Common myeloid progenitor, CD34-positive (primary cell): ENCODE measurements at regions of chr3 and their contacts with region 1.

Region 1: DNA sequence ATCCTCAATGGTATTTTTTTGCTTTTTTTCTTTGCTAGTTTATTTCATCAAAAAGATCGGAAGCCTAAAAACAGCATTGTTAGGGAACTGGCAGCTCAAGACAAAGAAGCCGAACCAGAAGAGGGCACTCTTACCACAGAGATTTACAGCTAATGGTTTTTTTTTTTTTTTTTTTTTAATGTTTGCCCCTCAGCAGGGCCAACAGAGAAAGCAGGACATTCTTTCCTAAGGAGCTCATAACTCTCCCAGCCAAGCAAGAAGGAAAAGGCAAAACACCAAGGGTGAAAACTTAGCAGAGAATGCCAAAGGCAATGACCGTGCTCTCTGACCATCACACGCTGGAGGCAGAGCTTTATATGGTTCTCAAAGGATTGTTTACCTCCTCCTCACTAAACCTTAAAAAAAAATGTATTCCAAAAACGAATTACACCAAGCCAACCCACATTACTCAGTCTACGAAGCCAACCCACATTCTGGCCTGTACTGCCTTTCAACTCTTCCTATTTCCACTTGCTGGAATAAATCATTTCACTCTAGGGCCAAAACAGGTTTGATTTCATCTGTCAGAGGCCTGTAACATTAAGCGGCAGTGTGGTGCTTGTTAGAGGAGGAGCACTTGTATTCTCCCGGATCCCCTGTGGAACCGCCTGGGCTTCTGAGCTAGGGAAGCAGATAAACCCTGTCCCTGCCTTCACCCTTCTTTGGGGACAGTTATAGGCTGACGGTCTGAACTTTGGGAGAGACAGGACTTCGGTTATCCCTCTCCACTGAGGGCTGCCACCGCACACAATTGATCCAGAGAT is 35.6 kb upstream of the GYG1 start:
- DNase-seq: peak; percentile 71 to 83 (median 78)
- H3K4me3 ChIP-seq: no peak overlapping the region
- H3K27ac ChIP-seq: no peak overlapping the region
- H3K4me1 ChIP-seq: peaks cover 0 to 3% (median 1%) of the 10 kb centered on the region in 4 experiments
- H3K27me3 ChIP-seq: no peaks in the 10 kb centered on the region

Region 2: GRCh38 chr3:148861277-148861869 is 94.4 kb before region 1 on chr3:
- CTCF ChIA-PET with region 1: interaction called, 155 read pairs
- POLR2A ChIA-PET with region 1: no interaction called
- DNase-seq: peak; percentile 56 to 77 (median 74)
- H3K4me3 ChIP-seq: no peak overlapping the region
- H3K27ac ChIP-seq: no peak overlapping the region
- H3K4me1 ChIP-seq: peaks cover 9 to 31% (median 25%) of the 10 kb centered on the region in 4 experiments
- H3K27me3 ChIP-seq: no peaks in the 10 kb centered on the region

Region 3: GRCh38 chr3:148943506-148944205 is 12.1 kb before region 1 on chr3:
- CTCF ChIA-PET with region 1: interaction called, 29 read pairs
- POLR2A ChIA-PET with region 1: no interaction called
- DNase-seq: peak; percentile 55 to 77 (median 75)
- H3K4me3 ChIP-seq: no peak overlapping the region
- H3K27ac ChIP-seq: no peak overlapping the region
- H3K4me1 ChIP-seq: no peaks in the 10 kb centered on the region
- H3K27me3 ChIP-seq: no peaks in the 10 kb centered on the region

Region 4: GRCh38 chr3:148990236-148990635 is 34.5 kb after region 1 on chr3:
- CTCF ChIA-PET with region 1: interaction called, 12 read pairs
- POLR2A ChIA-PET with region 1: no interaction called
- DNase-seq: peak in 2 of 3 donors; percentile 18 to 44
- H3K4me3 ChIP-seq: peak overlapping the region in 5 of 7 experiments; percentile 15 to 84 (median 82)
- H3K27ac ChIP-seq: no peak overlapping the region
- H3K4me1 ChIP-seq: peaks cover 11 to 28% (median 17%) of the 10 kb centered on the region in 4 experiments
- H3K27me3 ChIP-seq: no peaks in the 10 kb centered on the region

Region 5: DNA sequence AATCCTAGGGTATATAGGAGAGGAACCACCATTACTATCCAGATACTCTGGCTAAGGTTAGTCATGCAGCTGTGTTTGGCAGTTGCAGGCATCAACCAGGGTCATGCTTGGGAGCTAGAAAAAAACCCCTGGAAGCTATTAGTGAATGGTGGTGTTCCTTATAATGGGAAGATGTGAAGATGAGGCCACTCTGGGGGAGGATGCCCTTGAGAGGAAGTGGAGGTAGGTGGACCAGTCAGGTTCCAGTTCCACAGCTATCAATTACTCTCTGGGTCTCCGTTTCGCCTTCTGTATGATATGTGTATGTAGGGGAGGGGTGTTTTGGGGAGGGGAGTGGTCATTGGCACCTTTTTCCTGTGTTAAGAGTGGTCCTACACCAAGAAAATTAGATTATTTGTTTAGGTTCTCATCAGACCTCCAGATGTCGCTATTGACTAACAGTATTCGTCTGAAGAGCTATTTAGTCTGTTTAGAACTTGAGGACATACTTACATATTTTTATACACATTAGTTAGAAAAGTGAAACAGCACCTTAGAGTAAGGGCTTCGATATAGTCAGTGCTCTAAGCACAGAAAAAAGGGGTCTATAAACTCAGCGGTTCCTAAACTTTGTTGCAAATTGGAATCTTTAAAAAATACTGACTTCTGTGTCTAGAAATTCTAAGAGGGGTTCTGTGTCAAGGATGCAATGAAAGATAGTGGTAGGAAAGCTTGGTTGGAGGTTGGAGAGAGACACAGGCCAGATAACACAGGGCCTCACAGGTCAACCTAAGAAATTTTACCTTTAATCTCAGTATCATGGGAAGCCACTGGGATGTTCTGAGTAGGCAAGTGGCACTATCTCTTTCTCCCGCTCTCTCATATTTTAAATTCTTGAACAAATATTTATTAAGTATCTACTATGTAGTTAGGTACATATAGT is 164.6 kb after region 1 on chr3:
- CTCF ChIA-PET with region 1: interaction called, 19 read pairs
- POLR2A ChIA-PET with region 1: no interaction called
- DNase-seq: peak; percentile 76 to 87 (median 81)
- H3K4me3 ChIP-seq: no peak overlapping the region
- H3K27ac ChIP-seq: no peak overlapping the region
- H3K4me1 ChIP-seq: peaks cover 0 to 10% (median 3%) of the 10 kb centered on the region in 4 experiments
- H3K27me3 ChIP-seq: no peaks in the 10 kb centered on the region

Region 6: GRCh38 chr3:149273096-149273751 is 317.5 kb after region 1 on chr3:
- CTCF ChIA-PET with region 1: interaction called, 19 read pairs
- POLR2A ChIA-PET with region 1: no interaction called
- DNase-seq: peak; percentile 81 to 86 (median 82)
- H3K4me3 ChIP-seq: no peak overlapping the region
- H3K27ac ChIP-seq: no peak overlapping the region
- H3K4me1 ChIP-seq: peaks cover 7 to 30% (median 22%) of the 10 kb centered on the region in 4 experiments
- H3K27me3 ChIP-seq: no peaks in the 10 kb centered on the region

Region 7: GRCh38 chr3:149480325-149481017 is 524.7 kb after region 1 on chr3:
- CTCF ChIA-PET with region 1: interaction called, 11 read pairs
- POLR2A ChIA-PET with region 1: no interaction called
- DNase-seq: peak; percentile 67 to 80 (median 77)
- H3K4me3 ChIP-seq: no peak overlapping the region
- H3K27ac ChIP-seq: no peak overlapping the region
- H3K4me1 ChIP-seq: peaks cover 0 to 18% (median 8%) of the 10 kb centered on the region in 4 experiments
- H3K27me3 ChIP-seq: no peaks in the 10 kb centered on the region